WTC11 (cell line): ENCODE measurements at regions of chr5 and their contacts with region 1.

Region 1: GRCh38 chr5:141223112-141223783 is at the start of gene PCDHB14:
- DNase-seq: no peak
- ATAC-seq: peak; percentile 100
- H3K4me3 Mint-ChIP-seq: peak within 1 kb of the TSS; percentile 62
- H3K27ac Mint-ChIP-seq: peak within 1 kb of the TSS; percentile 19; the same call in 1 of the 2 replicates
- H3K4me1 Mint-ChIP-seq: peaks cover 11% of the 10 kb centered on the region
- H3K27me3 Mint-ChIP-seq: no peaks in the 10 kb centered on the region; the same call in none of the 2 replicates
- CTCF ChIP-seq: no peak
- total RNA-seq, gene PCDHB14: 2.6 to 3.5 TPM (median 2.8 TPM) in 3 replicates

Region 2: DNA sequence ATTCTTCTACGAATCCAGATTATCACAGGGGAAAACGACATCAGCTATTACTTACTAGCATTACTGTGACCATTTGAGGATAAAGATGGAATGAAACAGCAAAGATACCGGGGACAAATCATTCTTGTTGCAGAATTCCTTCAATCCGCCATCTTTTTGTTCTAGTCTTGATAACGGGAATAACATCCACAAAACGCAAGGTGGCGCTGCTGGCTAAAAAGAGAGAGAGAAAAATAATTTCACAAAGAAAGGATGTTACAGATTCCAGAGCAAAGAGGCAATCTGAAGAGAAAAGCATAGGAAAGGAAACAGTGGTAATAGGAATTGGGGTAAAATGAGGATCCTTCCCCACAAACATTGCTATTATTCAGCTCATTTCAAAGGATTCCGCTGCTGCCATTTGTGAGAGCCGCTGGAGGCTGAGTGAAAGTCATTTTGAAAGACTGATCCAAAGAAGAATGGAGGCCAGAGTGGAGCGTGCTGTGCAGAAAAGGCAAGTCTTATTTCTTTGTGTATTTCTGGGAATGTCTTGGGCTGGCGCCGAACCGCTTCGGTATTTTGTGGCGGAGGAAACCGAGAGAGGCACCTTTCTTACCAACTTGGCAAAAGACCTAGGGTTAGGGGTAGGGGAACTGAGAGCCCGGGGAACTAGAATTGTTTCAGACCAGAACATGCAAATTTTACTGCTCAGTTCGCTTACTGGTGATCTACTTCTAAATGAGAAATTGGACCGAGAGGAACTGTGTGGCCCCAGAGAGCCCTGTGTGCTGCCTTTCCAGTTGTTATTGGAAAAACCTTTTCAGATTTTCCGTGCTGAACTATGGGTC is 50.7 kb before region 1 on chr5 and contains the start of gene PCDHB7:
- CTCF ChIA-PET with region 1: interaction called, 10 read pairs
- POLR2A ChIA-PET with region 1: no interaction called
- DNase-seq: peak; percentile 57
- ATAC-seq: no peak
- H3K4me3 Mint-ChIP-seq: no peak within 1 kb of the TSS
- H3K27ac Mint-ChIP-seq: no peak within 1 kb of the TSS
- H3K4me1 Mint-ChIP-seq: no peaks in the 10 kb centered on the region
- H3K27me3 Mint-ChIP-seq: peaks cover 3% of the 10 kb centered on the region; the same call in 1 of the 2 replicates
- CTCF ChIP-seq: peak; percentile 66
- total RNA-seq, gene PCDHB7: 0.17 to 0.27 TPM (median 0.23 TPM) in 3 replicates

Region 3: DNA sequence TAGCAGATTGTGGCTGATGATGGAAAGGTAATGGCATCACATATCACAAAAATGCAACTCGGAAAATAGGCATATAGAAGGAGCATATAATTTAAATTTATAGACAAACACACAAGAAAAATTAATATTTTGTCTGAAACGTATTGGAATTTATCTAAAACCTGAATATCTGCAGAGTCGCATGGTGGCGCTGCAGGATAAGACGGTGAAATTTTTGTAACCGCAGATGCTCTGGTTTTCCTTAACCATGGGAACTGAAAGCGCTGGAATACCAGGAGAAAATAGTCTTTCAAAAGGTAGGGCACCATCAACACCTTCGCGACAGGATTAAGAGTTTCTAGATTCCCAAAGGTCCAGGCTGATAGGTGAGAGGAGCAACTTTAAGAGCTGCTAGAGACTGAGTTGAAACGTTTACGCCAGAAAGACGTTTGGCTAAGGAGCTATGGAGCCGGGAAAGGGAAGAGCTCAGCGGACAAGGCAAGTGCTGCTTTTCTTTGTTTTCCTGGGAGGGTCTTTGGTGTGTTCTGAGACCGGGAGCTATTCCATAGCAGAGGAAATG is 10.9 kb after region 1 on chr5:
- CTCF ChIA-PET with region 1: interaction called, 37 read pairs
- POLR2A ChIA-PET with region 1: interaction called, 3 read pairs
- DNase-seq: peak; percentile 47
- ATAC-seq: peak; percentile 64
- H3K4me3 Mint-ChIP-seq: peak overlapping the region; percentile 69
- H3K27ac Mint-ChIP-seq: no peak overlapping the region
- H3K4me1 Mint-ChIP-seq: peaks cover 5% of the 10 kb centered on the region
- H3K27me3 Mint-ChIP-seq: peaks cover 3% of the 10 kb centered on the region; the same call in 1 of the 2 replicates
- CTCF ChIP-seq: peak; percentile 45

Region 4: GRCh38 chr5:141338538-141339306 is 115.5 kb after region 1 on chr5 and contains the start of gene PCDHGA2:
- CTCF ChIA-PET with region 1: interaction called, 22 read pairs
- POLR2A ChIA-PET with region 1: no interaction called
- DNase-seq: peak; percentile 60
- ATAC-seq: peak; percentile 78
- H3K4me3 Mint-ChIP-seq: peak within 1 kb of the TSS; percentile 30; the same call in 1 of the 2 replicates
- H3K27ac Mint-ChIP-seq: no peak within 1 kb of the TSS
- H3K4me1 Mint-ChIP-seq: peaks cover 1% of the 10 kb centered on the region; the same call in 1 of the 2 replicates
- H3K27me3 Mint-ChIP-seq: no peaks in the 10 kb centered on the region; the same call in 1 of the 2 replicates
- CTCF ChIP-seq: peak; percentile 30; the same call in 1 of the 2 replicates
- total RNA-seq, gene PCDHGA2: 0.66 to 0.96 TPM (median 0.94 TPM) in 3 replicates

Region 5: GRCh38 chr5:141402553-141403260 is 179.5 kb after region 1 on chr5 and contains the start of gene PCDHGA9:
- CTCF ChIA-PET with region 1: interaction called, 10 read pairs
- POLR2A ChIA-PET with region 1: no interaction called
- DNase-seq: no peak
- ATAC-seq: no peak
- H3K4me3 Mint-ChIP-seq: no peak within 1 kb of the TSS
- H3K27ac Mint-ChIP-seq: no peak within 1 kb of the TSS
- H3K4me1 Mint-ChIP-seq: no peaks in the 10 kb centered on the region
- H3K27me3 Mint-ChIP-seq: peaks cover 14% of the 10 kb centered on the region
- CTCF ChIP-seq: no peak
- total RNA-seq, gene PCDHGA9: 1.9 to 2.9 TPM (median 2.3 TPM) in 3 replicates

Region 6: GRCh38 chr5:141557681-141558136 is 334.5 kb after region 1 on chr5:
- CTCF ChIA-PET with region 1: interaction called, 43 read pairs
- POLR2A ChIA-PET with region 1: no interaction called
- DNase-seq: peak; percentile 85
- ATAC-seq: peak; percentile 57
- H3K4me3 Mint-ChIP-seq: peak overlapping the region; percentile 61
- H3K27ac Mint-ChIP-seq: peak overlapping the region; percentile 97
- H3K4me1 Mint-ChIP-seq: peaks cover 38% of the 10 kb centered on the region
- H3K27me3 Mint-ChIP-seq: no peaks in the 10 kb centered on the region
- CTCF ChIP-seq: peak; percentile 92